ENCODE measurements at regions of chr17 and their contacts with region 1.

Region 1: GRCh38 chr17:41966463-41967140 is at the start of gene CNP:
- DNase-seq: peak; percentile 95
- H3K4me3 ChIP-seq: peak within 1 kb of the TSS; percentile 82 to 96 (median 88)
- H3K27ac ChIP-seq: peak within 1 kb of the TSS; percentile 91 to 99 (median 93)
- H3K4me1 ChIP-seq: peaks cover 0 to 60% (median 50%) of the 10 kb centered on the region in 4 donors
- H3K27me3 ChIP-seq: no peaks in the 10 kb centered on the region
- CTCF ChIP-seq: no peak
- EP300 ChIP-seq: no peak
- POLR2A ChIP-seq: peak; percentile 65 to 68
- total RNA-seq, gene CNP: 52.0 to 71.3 (median 65.2) TPM

Region 2: DNA sequence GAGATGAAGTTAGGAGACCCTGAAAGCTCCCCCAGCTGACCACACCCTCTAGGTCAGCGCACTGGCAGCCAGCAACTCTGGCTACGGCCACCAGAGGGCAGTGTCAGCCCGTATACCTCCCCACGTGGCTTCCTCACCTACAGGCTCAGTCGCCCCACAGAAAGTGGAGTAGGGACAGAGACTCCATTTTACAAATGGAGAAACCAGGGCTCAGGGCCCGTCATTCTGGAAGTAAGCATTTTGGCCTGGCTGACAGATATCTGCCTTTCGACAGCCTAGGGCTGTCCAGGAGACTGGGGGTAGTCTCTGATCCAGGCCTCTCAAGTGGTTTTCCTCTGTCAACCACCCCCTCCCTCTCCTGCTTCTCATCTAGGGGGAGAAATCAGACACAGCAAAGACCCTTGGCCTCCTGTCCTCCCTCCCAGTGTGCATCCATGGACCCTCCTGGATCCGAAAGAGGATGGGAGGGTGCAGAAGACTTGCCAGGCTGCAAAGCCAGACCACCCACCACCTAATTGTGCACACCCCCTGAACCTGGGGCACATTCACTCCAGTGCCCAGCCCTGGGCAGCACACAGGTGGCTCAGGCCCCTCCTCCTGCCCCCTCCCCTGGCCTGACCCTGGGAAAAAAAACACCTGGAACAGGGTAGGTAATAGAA is 228.4 kb before region 1 on chr17:
- intact Hi-C with region 1: loop called (anchors 10 kb)
- DNase-seq: peak; percentile 88
- H3K4me3 ChIP-seq: no peak overlapping the region
- H3K27ac ChIP-seq: no peak overlapping the region
- H3K4me1 ChIP-seq: peaks cover 0 to 23% (median 18%) of the 10 kb centered on the region in 4 donors
- H3K27me3 ChIP-seq: peaks cover 22 to 47% (median 42%) of the 10 kb centered on the region in 3 donors
- CTCF ChIP-seq: peak; percentile 95 to 99 (median 98)
- EP300 ChIP-seq: no peak
- POLR2A ChIP-seq: no peak

Region 3: GRCh38 chr17:41918314-41919164 is 48.1 kb before region 1 on chr17 and contains the start of gene ACLY:
- intact Hi-C with region 1: loop called (anchors 2 kb)
- DNase-seq: peak; percentile 98
- H3K4me3 ChIP-seq: peak within 1 kb of the TSS; percentile 58 to 85 (median 74)
- H3K27ac ChIP-seq: peak within 1 kb of the TSS; percentile 87 to 96 (median 91)
- H3K4me1 ChIP-seq: peaks cover 0 to 33% (median 24%) of the 10 kb centered on the region in 4 donors
- H3K27me3 ChIP-seq: no peaks in the 10 kb centered on the region
- CTCF ChIP-seq: no peak
- EP300 ChIP-seq: no peak
- POLR2A ChIP-seq: peak; percentile 79 to 81
- total RNA-seq, gene ACLY: 41.0 to 56.2 (median 44.7) TPM

Region 4: GRCh38 chr17:42016925-42017796 is 50.6 kb after region 1 on chr17 and contains the start of gene DNAJC7:
- intact Hi-C with region 1: loop called (anchors 2 kb)
- DNase-seq: peak; percentile 96
- H3K4me3 ChIP-seq: peak within 1 kb of the TSS; percentile 53 to 90 (median 81)
- H3K27ac ChIP-seq: peak within 1 kb of the TSS; percentile 89 to 93 (median 92)
- H3K4me1 ChIP-seq: peaks cover 0 to 77% (median 61%) of the 10 kb centered on the region in 4 donors
- H3K27me3 ChIP-seq: no peaks in the 10 kb centered on the region
- CTCF ChIP-seq: no peak
- EP300 ChIP-seq: no peak
- POLR2A ChIP-seq: peak; percentile 29 to 40
- total RNA-seq, gene DNAJC7: 46.7 to 57.1 (median 49.6) TPM

Region 5: DNA sequence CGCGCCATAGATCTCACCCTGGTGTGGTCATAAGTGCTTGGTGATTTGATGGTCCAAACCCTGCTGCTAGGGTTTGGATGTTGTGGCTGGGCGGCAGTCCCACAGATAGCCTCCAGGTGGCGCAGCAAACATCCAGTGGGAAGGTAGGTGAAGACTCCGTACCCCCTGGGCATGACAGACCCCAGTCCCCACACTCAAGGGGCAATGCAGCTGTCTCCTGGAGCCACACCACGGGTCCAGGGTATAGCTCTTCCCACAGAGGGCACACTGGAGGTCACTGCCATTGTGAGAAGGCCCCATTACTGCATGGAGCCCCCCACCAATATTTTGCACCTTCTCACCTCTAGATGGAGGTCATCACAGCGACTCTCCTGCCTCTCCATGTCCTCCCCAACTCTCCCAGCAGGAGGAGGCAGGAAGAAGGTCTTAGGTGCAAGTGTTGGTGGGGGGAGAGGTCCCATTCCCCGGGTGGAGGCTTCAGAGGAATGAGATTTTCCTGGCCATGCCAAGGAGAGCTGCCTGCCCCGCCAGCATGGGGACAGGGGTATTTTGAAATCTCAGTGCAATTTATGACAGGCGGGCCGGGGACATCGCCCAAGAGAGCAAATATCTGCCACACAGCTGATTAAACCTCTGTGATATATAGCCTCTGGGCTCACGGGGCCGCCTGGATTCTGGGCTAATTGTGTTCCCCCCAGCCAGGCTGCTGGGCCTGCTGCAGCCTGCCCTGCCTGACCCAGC is 100.9 kb after region 1 on chr17:
- intact Hi-C with region 1: no loop called
- DNase-seq: peak; percentile 75
- H3K4me3 ChIP-seq: no peak overlapping the region
- H3K27ac ChIP-seq: no peak overlapping the region
- H3K4me1 ChIP-seq: peaks cover 0 to 8% (median 7%) of the 10 kb centered on the region in 4 donors
- H3K27me3 ChIP-seq: peaks cover 8 to 41% (median 21%) of the 10 kb centered on the region in 3 donors
- CTCF ChIP-seq: peak; percentile 78 to 94 (median 83)
- EP300 ChIP-seq: no peak
- POLR2A ChIP-seq: no peak

Region 6: DNA sequence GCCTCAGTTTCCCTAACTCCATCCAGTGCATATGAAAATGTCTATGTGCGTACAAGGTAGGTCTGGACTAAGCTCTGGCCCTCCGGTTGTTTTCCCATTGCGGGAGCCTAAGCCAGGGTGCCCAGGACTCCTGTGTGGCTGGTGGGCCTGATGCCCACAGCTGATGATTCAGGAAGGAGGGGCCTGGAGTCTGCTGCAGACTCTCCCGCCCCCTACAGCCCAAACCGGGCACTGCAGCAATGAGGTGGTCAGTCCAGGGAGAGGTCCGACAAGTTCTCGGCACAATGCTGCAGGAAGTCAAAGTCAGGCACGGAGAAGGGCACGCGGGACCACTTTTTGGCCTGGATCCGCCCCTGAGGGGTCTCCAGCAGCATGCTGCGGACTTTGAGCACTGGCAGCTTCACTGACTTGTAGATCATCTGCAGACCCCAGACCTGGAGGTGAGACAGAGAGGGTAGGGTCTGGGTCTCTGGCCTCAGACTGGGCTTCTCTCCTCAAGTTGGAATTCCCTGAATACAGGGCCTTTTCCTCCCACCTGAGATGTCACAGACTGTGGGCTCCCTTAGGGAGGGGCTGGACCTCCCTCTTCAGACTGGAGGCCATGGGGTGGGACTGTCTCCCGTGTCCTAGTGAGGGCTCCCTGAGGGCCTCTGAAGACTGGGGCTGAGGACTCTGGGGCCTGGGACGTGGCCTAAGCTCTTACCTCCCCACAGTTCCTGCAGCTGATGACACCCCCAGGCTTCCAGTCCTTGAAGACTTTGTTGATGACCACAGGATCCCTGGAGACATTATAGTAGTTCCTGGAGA is 135.1 kb after region 1 on chr17:
- intact Hi-C with region 1: loop called (anchors 5 kb)
- DNase-seq: peak; percentile 83
- H3K4me3 ChIP-seq: no peak overlapping the region
- H3K27ac ChIP-seq: no peak overlapping the region
- H3K4me1 ChIP-seq: peaks cover 0 to 12% (median 10%) of the 10 kb centered on the region in 4 donors
- H3K27me3 ChIP-seq: peaks cover 6 to 19% (median 17%) of the 10 kb centered on the region in 3 donors
- CTCF ChIP-seq: peak; percentile 31 to 64 (median 54)
- EP300 ChIP-seq: no peak
- POLR2A ChIP-seq: no peak

Region 7: GRCh38 chr17:42112552-42113176 is 146.1 kb after region 1 on chr17 and contains the start of gene DHX58:
- intact Hi-C with region 1: loop called (anchors 5 kb)
- DNase-seq: peak; percentile 91
- H3K4me3 ChIP-seq: peak within 1 kb of the TSS; percentile 48 to 63 (median 61)
- H3K27ac ChIP-seq: peak within 1 kb of the TSS; percentile 90 to 96 (median 92)
- H3K4me1 ChIP-seq: peaks cover 0 to 29% (median 24%) of the 10 kb centered on the region in 4 donors
- H3K27me3 ChIP-seq: no peaks in the 10 kb centered on the region
- CTCF ChIP-seq: no peak
- EP300 ChIP-seq: no peak
- POLR2A ChIP-seq: peak; percentile 50 to 60
- total RNA-seq, gene DHX58: 8.9 to 16.3 (median 14.6) TPM